Activated CD4-positive, alpha-beta memory T cell treated with anti-CD3 and anti-CD28 coated beads for 36 hours (primary cell): ENCODE measurements at regions of chr12 and their contacts with region 1.

Region 1: DNA sequence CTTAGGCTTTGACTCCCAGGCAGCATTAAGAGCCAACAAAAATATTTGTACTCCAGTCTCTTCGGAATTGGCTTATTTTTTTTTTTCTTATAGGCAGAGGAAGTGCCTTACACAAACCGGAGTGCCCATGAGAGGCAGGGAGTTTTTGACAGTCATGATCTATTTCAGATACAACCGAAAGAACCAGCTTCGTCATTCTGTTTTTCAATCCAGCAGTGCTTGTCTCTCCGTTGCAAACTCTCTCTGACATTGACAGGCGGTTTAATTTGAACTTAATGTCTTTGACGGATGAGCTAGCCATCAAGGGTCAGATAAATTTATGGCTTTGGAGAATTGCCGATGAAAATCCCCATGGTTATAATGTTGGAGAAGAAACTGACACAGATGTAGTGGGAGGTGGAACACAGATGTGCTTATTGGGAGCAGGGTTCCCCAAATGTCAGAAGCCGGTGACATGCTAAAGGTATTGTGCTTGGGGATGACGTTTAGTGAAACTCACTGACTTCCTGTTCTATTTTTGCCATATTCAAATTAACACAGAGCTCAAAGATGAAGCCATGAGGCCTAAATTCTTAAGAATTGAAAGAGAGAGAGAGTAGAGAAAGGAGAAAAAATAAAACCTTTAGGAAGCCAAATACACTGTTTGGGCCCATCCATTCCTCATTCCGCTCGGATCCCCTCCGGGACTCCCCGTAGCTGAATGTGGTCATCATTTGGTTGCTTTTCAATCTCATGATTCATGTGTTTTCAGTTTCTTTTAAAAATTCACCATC is 59.7 kb downstream of the PLXNC1 start:
- DNase-seq: peak; percentile 70
- H3K4me3 Mint-ChIP-seq: peak overlapping the region; percentile 71
- H3K27ac Mint-ChIP-seq: peak overlapping the region; percentile 97
- H3K4me1 Mint-ChIP-seq: peaks cover 60% of the 10 kb centered on the region
- H3K27me3 Mint-ChIP-seq: no peaks in the 10 kb centered on the region

Region 2: GRCh38 chr12:93785262-93786010 is 422.6 kb before region 1 on chr12:
- CTCF ChIA-PET with region 1: no interaction called
- POLR2A ChIA-PET with region 1: no interaction called
- intact Hi-C with region 1: loop called (anchors 2 kb)
- DNase-seq: peak; percentile 73
- H3K4me3 Mint-ChIP-seq: peak overlapping the region; percentile 16
- H3K27ac Mint-ChIP-seq: peak overlapping the region; percentile 81
- H3K4me1 Mint-ChIP-seq: peaks cover 57% of the 10 kb centered on the region
- H3K27me3 Mint-ChIP-seq: no peaks in the 10 kb centered on the region

Region 3: DNA sequence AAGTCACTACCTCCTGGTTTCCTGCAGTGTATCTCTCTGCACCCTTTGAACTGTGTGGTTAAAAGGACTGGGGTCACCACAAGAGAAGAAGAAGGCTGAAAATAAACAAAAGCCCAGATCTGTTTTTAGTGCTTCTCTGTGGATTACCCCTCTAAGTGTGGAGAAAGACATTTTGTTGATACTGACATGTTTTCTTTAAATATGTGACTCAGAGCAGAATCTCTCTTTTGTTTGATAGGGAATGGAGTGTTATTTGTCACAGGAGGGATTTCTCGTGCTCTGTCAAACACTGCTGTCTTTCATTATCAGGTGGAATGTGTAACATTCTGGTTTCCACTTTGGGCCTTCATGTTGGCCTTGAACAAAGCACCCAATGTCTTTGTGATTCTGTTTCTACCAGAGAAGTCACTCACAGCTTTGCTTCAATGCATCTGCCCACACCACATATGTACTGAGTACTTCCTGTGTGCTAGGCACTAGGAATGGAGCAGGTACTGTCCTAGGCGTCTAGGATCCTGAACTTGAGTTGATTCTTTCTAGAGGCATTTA is 22.4 kb after region 1 on chr12:
- CTCF ChIA-PET with region 1: no interaction called
- POLR2A ChIA-PET with region 1: no interaction called
- intact Hi-C with region 1: loop called (anchors 2 kb)
- DNase-seq: no peak
- H3K4me3 Mint-ChIP-seq: no peak overlapping the region
- H3K27ac Mint-ChIP-seq: peak overlapping the region; percentile 65
- H3K4me1 Mint-ChIP-seq: peaks cover 12% of the 10 kb centered on the region
- H3K27me3 Mint-ChIP-seq: no peaks in the 10 kb centered on the region

Region 4: GRCh38 chr12:94269316-94269999 is 61.4 kb after region 1 on chr12:
- CTCF ChIA-PET with region 1: interaction called, 4 read pairs
- POLR2A ChIA-PET with region 1: interaction called, 14 read pairs
- intact Hi-C with region 1: loop called (anchors 1 kb)
- DNase-seq: no peak
- H3K4me3 Mint-ChIP-seq: no peak overlapping the region
- H3K27ac Mint-ChIP-seq: no peak overlapping the region
- H3K4me1 Mint-ChIP-seq: peaks cover 49% of the 10 kb centered on the region
- H3K27me3 Mint-ChIP-seq: no peaks in the 10 kb centered on the region

Region 5: DNA sequence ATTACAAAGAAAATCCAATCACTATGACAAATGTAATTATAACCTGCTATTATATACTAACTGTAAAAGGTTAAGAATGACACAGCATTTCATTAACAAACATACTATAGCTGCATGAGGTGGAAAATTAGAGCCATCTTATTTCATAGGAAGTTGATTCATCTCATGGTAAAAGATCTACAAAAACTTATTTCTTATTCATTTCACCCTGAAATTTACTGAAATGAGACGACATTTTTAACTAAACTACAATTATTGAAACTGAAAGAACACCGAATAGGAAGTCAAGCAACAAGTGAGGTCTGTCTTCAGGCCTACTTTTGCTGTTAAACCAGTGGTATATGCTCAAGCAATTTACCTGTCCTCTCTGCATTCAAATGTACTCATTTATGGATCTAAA is 164.4 kb after region 1 on chr12:
- CTCF ChIA-PET with region 1: interaction called, 3 read pairs
- POLR2A ChIA-PET with region 1: interaction called, 3 read pairs
- intact Hi-C with region 1: loop called (anchors 1 kb)
- DNase-seq: no peak
- H3K4me3 Mint-ChIP-seq: no peak overlapping the region
- H3K27ac Mint-ChIP-seq: peak overlapping the region; percentile 80
- H3K4me1 Mint-ChIP-seq: peaks cover 40% of the 10 kb centered on the region
- H3K27me3 Mint-ChIP-seq: no peaks in the 10 kb centered on the region

Region 6: GRCh38 chr12:94644141-94644979 is 436.3 kb after region 1 on chr12:
- CTCF ChIA-PET with region 1: no interaction called
- POLR2A ChIA-PET with region 1: no interaction called
- intact Hi-C with region 1: loop called (anchors 5 kb)
- DNase-seq: peak; percentile 24
- H3K4me3 Mint-ChIP-seq: no peak overlapping the region
- H3K27ac Mint-ChIP-seq: peak overlapping the region; percentile 65
- H3K4me1 Mint-ChIP-seq: peaks cover 37% of the 10 kb centered on the region
- H3K27me3 Mint-ChIP-seq: peaks cover 48% of the 10 kb centered on the region